PC-3 (cell line): ENCODE measurements at regions of chr5 and their contacts with region 1.

Region 1: DNA sequence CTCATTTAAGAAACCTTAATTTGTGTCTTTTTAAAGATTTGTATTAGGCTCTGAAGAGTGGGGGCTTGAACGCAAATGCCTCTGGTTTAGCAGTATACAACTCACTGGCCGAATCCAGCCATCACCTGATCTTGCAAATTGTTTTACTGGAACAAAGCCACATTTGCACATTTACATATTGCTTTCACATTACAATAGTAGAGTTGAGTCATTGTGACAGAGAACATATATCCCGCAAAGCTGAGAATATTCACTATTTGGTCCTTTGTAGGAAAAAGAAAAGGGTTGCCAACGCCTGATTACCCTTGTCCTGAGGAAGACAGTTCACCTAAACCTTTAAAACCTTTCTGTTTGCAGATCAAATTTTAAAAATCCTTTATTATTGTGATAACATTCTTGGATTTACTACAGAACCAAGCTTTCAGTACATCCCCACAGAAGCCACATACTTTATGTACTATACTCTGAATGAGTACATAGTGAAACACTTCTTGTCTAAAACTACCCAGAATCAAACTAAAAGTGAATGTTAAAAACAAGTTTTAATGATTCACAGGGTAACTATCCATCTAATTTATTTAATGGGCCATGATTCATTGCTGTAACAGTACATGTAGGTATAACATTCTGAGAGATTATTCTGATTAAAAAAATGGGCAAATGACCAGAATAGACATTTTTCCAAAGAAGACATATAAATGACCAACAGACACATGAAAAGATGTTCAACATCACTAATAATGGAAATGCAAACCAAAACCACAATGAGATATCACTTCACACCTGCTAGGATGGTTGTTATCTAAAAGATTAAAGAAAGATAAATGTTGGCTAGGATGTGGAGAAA is 161.0 kb downstream of the SLC25A46 start:
- DNase-seq: peak; percentile 92
- ATAC-seq: peak; percentile 72
- H3K4me3 ChIP-seq: peak overlapping the region; percentile 22; the same call in 1 of the 2 replicates
- H3K27ac ChIP-seq: peak overlapping the region; percentile 96
- H3K4me1 ChIP-seq: peaks cover 39% of the 10 kb centered on the region
- H3K27me3 ChIP-seq: no peaks in the 10 kb centered on the region
- CTCF ChIP-seq: no peak

Region 2: DNA sequence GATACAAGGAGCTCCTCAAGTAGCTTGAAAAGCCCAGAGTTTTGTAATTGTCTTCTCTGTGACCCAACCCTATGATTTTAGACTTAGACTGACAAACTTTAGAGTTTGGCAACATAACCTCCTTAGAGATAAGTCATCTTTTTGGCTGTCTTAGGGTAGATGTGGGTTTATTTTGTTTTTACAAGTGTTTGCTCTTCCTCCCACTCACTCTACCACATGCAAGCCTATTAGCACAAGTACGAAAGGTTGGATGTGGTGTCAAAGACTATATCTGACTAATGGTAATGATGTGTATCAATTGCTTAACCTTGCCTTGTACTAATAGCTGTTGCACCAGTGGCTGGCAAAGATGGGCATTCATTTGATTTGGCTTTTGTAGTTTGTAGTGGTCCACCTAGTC is 114.5 kb before region 1 on chr5:
- CTCF ChIA-PET with region 1: no interaction called
- POLR2A ChIA-PET with region 1: no interaction called
- intact Hi-C with region 1: loop called (anchors 1 kb)
- DNase-seq: peak; percentile 96
- ATAC-seq: peak; percentile 93
- H3K4me3 ChIP-seq: peak overlapping the region; percentile 3; the same call in 1 of the 2 replicates
- H3K27ac ChIP-seq: peak overlapping the region; percentile 92
- H3K4me1 ChIP-seq: peaks cover 22% of the 10 kb centered on the region
- H3K27me3 ChIP-seq: no peaks in the 10 kb centered on the region
- CTCF ChIP-seq: no peak

Region 3: GRCh38 chr5:110916381-110917049 is 16.7 kb after region 1 on chr5:
- CTCF ChIA-PET with region 1: interaction called, 11 read pairs
- POLR2A ChIA-PET with region 1: no interaction called
- intact Hi-C with region 1: loop called (anchors 1 kb)
- DNase-seq: peak; percentile 90
- ATAC-seq: peak; percentile 98
- H3K4me3 ChIP-seq: peak overlapping the region; percentile 42; the same call in 1 of the 2 replicates
- H3K27ac ChIP-seq: peak overlapping the region; percentile 37
- H3K4me1 ChIP-seq: peaks cover 26% of the 10 kb centered on the region
- H3K27me3 ChIP-seq: no peaks in the 10 kb centered on the region
- CTCF ChIP-seq: no peak